ENCODE measurements at regions of chr16 and their contacts with region 1.

Region 1: DNA sequence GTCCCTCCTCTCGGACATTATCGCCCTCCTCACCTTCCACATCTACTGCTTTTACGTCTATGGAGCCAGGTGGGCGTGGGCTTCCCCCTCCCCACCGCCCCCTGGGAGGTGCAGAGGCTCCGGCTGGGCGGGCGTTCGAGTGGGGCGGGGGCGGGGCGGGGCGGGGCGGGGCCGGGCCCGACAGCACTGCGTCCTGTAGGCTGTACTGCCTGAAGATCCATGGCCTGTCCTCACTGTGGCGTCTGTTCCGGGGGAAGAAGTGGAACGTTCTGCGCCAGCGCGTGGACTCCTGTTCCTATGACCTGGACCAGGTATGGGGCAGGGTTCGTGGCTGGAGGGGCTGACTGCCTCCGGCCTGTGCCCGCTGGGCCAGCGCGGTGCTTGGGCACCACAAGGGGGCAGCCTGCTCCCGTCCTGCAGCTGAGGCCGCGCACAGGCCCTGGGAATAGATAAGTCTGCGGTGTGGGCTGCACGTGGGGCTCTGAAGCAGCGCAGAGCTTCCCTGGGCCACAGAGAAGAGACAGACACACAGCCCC is 9.2 kb downstream of the PIGQ start:
- DNase-seq: peak; percentile 42 to 73 (median 64)
- H3K4me3 ChIP-seq: no peak overlapping the region
- H3K4me3 Mint-ChIP-seq: no peak overlapping the region
- H3K27ac ChIP-seq: no peak overlapping the region
- H3K27ac Mint-ChIP-seq: no peak overlapping the region
- H3K4me1 ChIP-seq: no peaks in the 10 kb centered on the region
- H3K4me1 Mint-ChIP-seq: no peaks in the 10 kb centered on the region
- H3K27me3 ChIP-seq: no peaks in the 10 kb centered on the region
- H3K27me3 Mint-ChIP-seq: no peaks in the 10 kb centered on the region

Region 2: GRCh38 chr16:414395-415169 is 164.4 kb before region 1 on chr16:
- CTCF ChIA-PET with region 1: no interaction called
- POLR2A ChIA-PET with region 1: no interaction called
- intact Hi-C with region 1: no loop called
- DNase-seq: no peak
- H3K4me3 ChIP-seq: no peak overlapping the region
- H3K4me3 Mint-ChIP-seq: no peak overlapping the region
- H3K27ac ChIP-seq: no peak overlapping the region
- H3K27ac Mint-ChIP-seq: no peak overlapping the region
- H3K4me1 ChIP-seq: no peaks in the 10 kb centered on the region
- H3K4me1 Mint-ChIP-seq: no peaks in the 10 kb centered on the region
- H3K27me3 ChIP-seq: no peaks in the 10 kb centered on the region
- H3K27me3 Mint-ChIP-seq: no peaks in the 10 kb centered on the region

Region 3: GRCh38 chr16:595942-596735 is 17.2 kb after region 1 on chr16:
- CTCF ChIA-PET with region 1: no interaction called
- POLR2A ChIA-PET with region 1: no interaction called
- intact Hi-C with region 1: no loop called
- DNase-seq: no peak
- H3K4me3 ChIP-seq: no peak overlapping the region
- H3K4me3 Mint-ChIP-seq: no peak overlapping the region
- H3K27ac ChIP-seq: no peak overlapping the region
- H3K27ac Mint-ChIP-seq: peak overlapping the region in 2 of 7 donors; percentile 37 to 57
- H3K4me1 ChIP-seq: peaks cover 7% of the 10 kb centered on the region
- H3K4me1 Mint-ChIP-seq: peaks cover 15 to 39% (median 16%) of the 10 kb centered on the region in 4 donors
- H3K27me3 ChIP-seq: no peaks in the 10 kb centered on the region
- H3K27me3 Mint-ChIP-seq: no peaks in the 10 kb centered on the region

Region 4: GRCh38 chr16:610513-611334 is 31.8 kb after region 1 on chr16:
- CTCF ChIA-PET with region 1: interaction called, 3 read pairs
- POLR2A ChIA-PET with region 1: no interaction called
- intact Hi-C with region 1: loop called (anchors 2 kb)
- DNase-seq: peak; percentile 44 to 57 (median 51)
- H3K4me3 ChIP-seq: no peak overlapping the region
- H3K4me3 Mint-ChIP-seq: no peak overlapping the region
- H3K27ac ChIP-seq: no peak overlapping the region
- H3K27ac Mint-ChIP-seq: peak overlapping the region in 3 of 7 donors; percentile 8 to 22 (median 19)
- H3K4me1 ChIP-seq: no peaks in the 10 kb centered on the region
- H3K4me1 Mint-ChIP-seq: peaks cover 3 to 17% (median 9%) of the 10 kb centered on the region in 4 donors
- H3K27me3 ChIP-seq: no peaks in the 10 kb centered on the region
- H3K27me3 Mint-ChIP-seq: no peaks in the 10 kb centered on the region